ENCODE measurements at regions of chr17 and their contacts with region 1.

Region 1: DNA sequence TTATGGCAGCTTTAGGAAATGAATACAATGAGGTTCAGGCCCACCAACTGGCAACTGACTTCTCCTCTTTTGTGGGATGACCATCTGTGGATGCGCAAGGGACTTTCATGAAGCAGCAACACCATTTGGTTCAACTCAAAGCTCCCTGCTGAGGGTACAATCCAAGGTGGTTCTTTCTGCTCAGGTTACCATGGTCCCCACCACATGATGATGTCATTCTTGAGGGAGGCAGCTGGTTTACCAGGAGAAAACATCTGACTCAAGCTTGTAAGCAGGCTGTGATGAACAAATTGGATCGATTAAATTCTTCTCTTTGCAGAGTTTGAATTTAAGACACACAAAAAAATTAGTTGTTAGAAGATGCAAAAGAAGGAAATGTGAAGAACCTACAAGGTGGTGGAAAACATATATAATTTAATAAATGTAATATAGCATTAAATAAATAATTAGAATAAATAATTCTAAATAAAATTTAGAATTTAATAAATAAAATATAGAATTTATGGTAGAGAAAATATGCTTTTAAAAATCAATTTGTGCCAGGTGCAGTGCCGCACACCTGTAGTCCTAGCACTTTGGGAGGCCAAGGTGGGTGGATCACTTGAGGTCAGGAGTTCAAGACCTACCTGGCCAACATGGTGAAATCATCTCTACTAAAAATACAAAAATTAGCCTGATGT is 67.5 kb upstream of the ANKFN1 start:
- DNase-seq: no peak

Region 2: GRCh38 chr17:56096026-56096810 is 10.5 kb after region 1 on chr17:
- intact Hi-C with region 1: loop called (anchors 2 kb)
- DNase-seq: no peak